Naive thymus-derived CD4-positive, alpha-beta T cell (primary cell): ENCODE measurements at regions of chr22 and their contacts with region 1.

Region 1: GRCh38 chr22:46296257-46297150 is at the start of gene GTSE1:
- DNase-seq: peak; percentile 90 to 97 (median 96)
- ATAC-seq: peak; percentile 99
- H3K4me3 ChIP-seq: peak within 1 kb of the TSS; percentile 72
- H3K4me3 Mint-ChIP-seq: peak within 1 kb of the TSS; percentile 87 to 97 (median 91)
- H3K27ac ChIP-seq: peak within 1 kb of the TSS; percentile 77
- H3K27ac Mint-ChIP-seq: peak within 1 kb of the TSS; percentile 91 to 99 (median 97)
- H3K4me1 ChIP-seq: peaks cover 8 to 15% of the 10 kb centered on the region in 2 donors
- H3K4me1 Mint-ChIP-seq: peaks cover 14 to 60% (median 27%) of the 10 kb centered on the region in 7 donors
- H3K27me3 ChIP-seq: no peaks in the 10 kb centered on the region
- H3K27me3 Mint-ChIP-seq: peaks cover 0 to 11% (median 9%) of the 10 kb centered on the region in 5 donors
- total RNA-seq, gene GTSE1: 0.30 to 55.5 (median 0.61) TPM in 3 of 5 experiments, not detected in the others

Region 2: DNA sequence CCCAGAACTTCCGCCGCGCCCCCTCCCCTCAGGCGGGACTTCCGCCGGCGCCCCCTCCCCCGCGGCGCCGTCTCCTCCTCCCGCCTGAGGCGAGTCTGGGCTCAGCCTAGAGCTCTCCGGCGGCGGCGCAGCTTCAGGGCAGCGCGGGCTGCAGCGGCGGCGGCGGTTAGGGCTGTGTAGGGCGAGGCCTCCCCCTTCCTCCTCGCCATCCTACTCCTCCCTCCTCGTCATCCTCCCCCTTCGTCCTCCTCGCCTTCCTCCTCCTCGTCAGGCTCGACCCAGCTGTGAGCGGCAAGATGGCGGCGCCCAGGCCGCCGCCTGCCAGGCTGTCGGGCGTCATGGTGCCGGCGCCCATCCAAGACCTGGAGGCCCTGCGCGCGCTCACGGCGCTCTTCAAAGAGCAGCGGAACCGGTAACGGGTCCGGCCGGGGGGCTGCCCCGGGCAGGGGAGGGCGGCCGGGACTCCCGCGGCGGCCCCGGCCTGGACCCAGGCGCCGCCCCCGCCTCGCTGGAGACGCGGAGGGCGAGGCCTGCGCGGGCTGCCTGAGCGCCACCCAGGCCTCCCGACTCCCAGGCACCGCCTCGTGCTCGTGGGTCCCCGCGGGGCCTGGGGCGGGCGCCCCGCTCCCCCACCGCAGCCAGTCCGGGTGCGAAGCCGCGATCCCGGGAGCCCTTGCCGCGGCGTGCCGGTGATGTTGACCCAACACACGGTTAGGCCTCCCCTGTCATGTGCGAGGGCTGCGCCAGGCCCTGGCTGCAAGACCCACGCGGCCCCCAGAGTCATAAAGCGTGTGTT is 624.5 kb before region 1 on chr22 and contains the start of gene ATXN10:
- CTCF ChIA-PET with region 1: no interaction called
- POLR2A ChIA-PET with region 1: no interaction called
- intact Hi-C with region 1: loop called in 1 of 2 experiments (anchors 1 kb)
- DNase-seq: peak; percentile 55 to 79 (median 74)
- ATAC-seq: peak; percentile 90
- H3K4me3 ChIP-seq: peak within 1 kb of the TSS; percentile 49
- H3K4me3 Mint-ChIP-seq: peak within 1 kb of the TSS; percentile 86 to 95 (median 90)
- H3K27ac ChIP-seq: peak within 1 kb of the TSS; percentile 75
- H3K27ac Mint-ChIP-seq: peak within 1 kb of the TSS; percentile 38 to 92 (median 88)
- H3K4me1 ChIP-seq: peaks cover 13 to 25% of the 10 kb centered on the region in 2 donors
- H3K4me1 Mint-ChIP-seq: peaks cover 23 to 43% (median 41%) of the 10 kb centered on the region in 7 donors
- H3K27me3 ChIP-seq: no peaks in the 10 kb centered on the region
- H3K27me3 Mint-ChIP-seq: peaks cover 4 to 10% (median 6%) of the 10 kb centered on the region in 5 donors
- total RNA-seq, gene ATXN10: 64.2 to 85.7 (median 73.1) TPM

Region 3: GRCh38 chr22:46057762-46058420 is 238.6 kb before region 1 on chr22:
- CTCF ChIA-PET with region 1: no interaction called
- POLR2A ChIA-PET with region 1: no interaction called
- intact Hi-C with region 1: loop called (anchors 5 kb)
- DNase-seq: peak in 5 of 9 donors; percentile 39 to 55 (median 53)
- ATAC-seq: peak; percentile 74
- H3K4me3 ChIP-seq: no peak overlapping the region
- H3K4me3 Mint-ChIP-seq: peak overlapping the region; percentile 17 to 71 (median 66)
- H3K27ac ChIP-seq: peak overlapping the region; percentile 72
- H3K27ac Mint-ChIP-seq: peak overlapping the region; percentile 84 to 95 (median 87)
- H3K4me1 ChIP-seq: peaks cover 19 to 35% of the 10 kb centered on the region in 2 donors
- H3K4me1 Mint-ChIP-seq: peaks cover 29 to 64% (median 58%) of the 10 kb centered on the region in 7 donors
- H3K27me3 ChIP-seq: no peaks in the 10 kb centered on the region
- H3K27me3 Mint-ChIP-seq: peaks cover 0 to 5% (median 0%) of the 10 kb centered on the region in 5 donors

Region 4: DNA sequence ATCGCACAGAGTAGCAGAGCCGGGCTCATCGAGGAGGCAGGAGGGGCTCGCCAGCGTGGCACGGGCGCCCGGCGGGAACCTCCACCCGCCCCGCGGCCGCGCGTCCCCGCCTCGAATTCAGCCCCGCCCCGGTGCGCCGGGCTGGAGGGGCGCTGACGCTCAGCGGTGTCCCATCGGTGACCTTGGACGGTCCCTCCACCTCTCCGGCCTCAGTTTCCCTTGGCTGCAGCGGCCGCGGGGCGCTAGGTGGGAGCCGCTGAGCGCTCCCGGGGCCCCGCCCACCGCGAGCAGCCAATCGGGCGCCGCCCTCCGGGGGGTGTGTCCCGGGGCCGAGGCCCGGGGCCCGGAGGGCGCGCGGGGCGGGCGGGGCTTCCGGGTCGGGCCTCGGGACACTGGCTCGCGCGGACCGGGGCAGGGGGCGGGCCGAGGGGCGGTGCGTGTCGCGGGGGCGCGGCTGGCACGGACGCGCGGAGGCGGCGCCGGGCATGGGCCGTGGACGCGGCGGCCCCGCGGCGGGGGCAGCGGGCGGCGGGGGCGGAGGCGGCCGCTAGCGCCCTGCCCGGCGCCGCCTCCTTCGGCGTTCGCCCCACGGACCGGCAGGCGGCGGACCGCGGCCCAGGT is 146.4 kb before region 1 on chr22 and contains the start of gene PPARA:
- CTCF ChIA-PET with region 1: no interaction called
- POLR2A ChIA-PET with region 1: interaction called, 5 read pairs
- intact Hi-C with region 1: loop called (anchors 1 to 2 kb)
- DNase-seq: peak; percentile 63 to 97 (median 73)
- ATAC-seq: peak; percentile 90
- H3K4me3 ChIP-seq: peak within 1 kb of the TSS; percentile 74
- H3K4me3 Mint-ChIP-seq: peak within 1 kb of the TSS; percentile 77 to 90 (median 86)
- H3K27ac ChIP-seq: peak within 1 kb of the TSS; percentile 71
- H3K27ac Mint-ChIP-seq: peak within 1 kb of the TSS; percentile 34 to 90 (median 82)
- H3K4me1 ChIP-seq: peaks cover 10 to 15% of the 10 kb centered on the region in 2 donors
- H3K4me1 Mint-ChIP-seq: peaks cover 13 to 24% (median 20%) of the 10 kb centered on the region in 7 donors
- H3K27me3 ChIP-seq: no peaks in the 10 kb centered on the region
- H3K27me3 Mint-ChIP-seq: peaks cover 0 to 40% (median 0%) of the 10 kb centered on the region in 5 donors
- total RNA-seq, gene PPARA: 13.7 to 21.6 (median 18.5) TPM

Region 5: DNA sequence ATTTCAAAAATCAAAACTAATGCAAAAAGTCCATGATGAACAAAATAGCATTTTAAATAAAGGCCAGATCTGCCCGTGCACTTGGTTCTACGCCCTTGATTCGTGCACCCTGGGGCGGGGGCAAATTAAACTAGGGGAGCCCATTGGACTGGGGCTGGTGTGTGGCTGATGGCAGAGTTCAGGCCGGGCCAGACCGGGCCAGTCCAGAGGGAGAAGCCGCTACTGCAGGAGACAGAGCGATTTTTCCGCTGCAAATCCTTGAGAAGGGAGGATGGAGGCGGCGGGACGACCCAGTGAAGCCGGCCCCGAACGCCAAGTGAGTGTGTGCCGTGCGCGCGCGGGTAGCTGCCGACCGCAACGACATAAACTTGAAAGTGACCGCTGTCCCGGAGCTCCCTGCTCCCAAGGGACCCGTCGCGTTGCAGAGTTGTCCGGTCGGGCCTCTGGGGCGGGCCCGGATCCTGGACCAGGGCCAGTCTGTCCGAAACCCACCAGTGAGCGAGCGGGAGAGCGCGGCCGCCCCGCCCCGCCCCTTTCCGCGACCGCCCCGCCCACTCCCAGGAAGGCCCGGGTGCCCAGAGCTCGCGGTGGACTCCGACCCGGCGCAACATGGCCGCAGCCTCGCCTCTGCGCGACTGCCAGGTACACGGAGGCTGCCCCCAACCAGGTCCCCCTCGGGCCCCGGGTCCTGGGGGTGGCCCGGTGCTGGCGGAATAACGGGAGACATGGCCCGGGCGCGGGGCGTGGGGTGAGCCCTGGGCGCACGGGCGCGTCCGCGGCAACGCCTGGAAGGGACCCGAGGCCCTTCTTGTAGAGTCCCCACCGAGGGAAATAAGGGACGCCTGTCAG is 28.8 kb before region 1 on chr22 and contains the start of gene TTC38:
- CTCF ChIA-PET with region 1: no interaction called
- POLR2A ChIA-PET with region 1: interaction called, 3 read pairs
- intact Hi-C with region 1: loop called (anchors 1 kb)
- DNase-seq: peak in 8 of 9 donors; percentile 21 to 72 (median 28)
- ATAC-seq: peak; percentile 90
- H3K4me3 ChIP-seq: peak within 1 kb of the TSS; percentile 63
- H3K4me3 Mint-ChIP-seq: peak within 1 kb of the TSS; percentile 82 to 93 (median 89)
- H3K27ac ChIP-seq: peak within 1 kb of the TSS; percentile 48
- H3K27ac Mint-ChIP-seq: peak within 1 kb of the TSS in 6 of 9 donors; percentile 12 to 77 (median 68)
- H3K4me1 ChIP-seq: peaks cover 0 to 4% of the 10 kb centered on the region in 2 donors
- H3K4me1 Mint-ChIP-seq: peaks cover 6 to 27% (median 17%) of the 10 kb centered on the region in 7 donors
- H3K27me3 ChIP-seq: peaks cover 0 to 3% of the 10 kb centered on the region in 2 donors
- H3K27me3 Mint-ChIP-seq: peaks cover 16 to 35% (median 26%) of the 10 kb centered on the region in 5 donors
- total RNA-seq, gene TTC38: 4.1 to 26.0 (median 7.2) TPM

Region 6: GRCh38 chr22:46367707-46368191 is 71.2 kb after region 1 on chr22:
- CTCF ChIA-PET with region 1: no interaction called
- POLR2A ChIA-PET with region 1: no interaction called
- intact Hi-C with region 1: no loop called
- DNase-seq: peak; percentile 43 to 76 (median 65)
- ATAC-seq: peak; percentile 76
- H3K4me3 ChIP-seq: no peak overlapping the region
- H3K4me3 Mint-ChIP-seq: peak overlapping the region in 5 of 10 donors; percentile 23 to 82 (median 78)
- H3K27ac ChIP-seq: no peak overlapping the region
- H3K27ac Mint-ChIP-seq: peak overlapping the region in 1 of 9 donors; percentile 22
- H3K4me1 ChIP-seq: peaks cover 14 to 44% of the 10 kb centered on the region in 2 donors
- H3K4me1 Mint-ChIP-seq: peaks cover 0 to 28% (median 21%) of the 10 kb centered on the region in 7 donors
- H3K27me3 ChIP-seq: no peaks in the 10 kb centered on the region
- H3K27me3 Mint-ChIP-seq: peaks cover 0 to 20% (median 3%) of the 10 kb centered on the region in 5 donors

Region 7: GRCh38 chr22:46563381-46564083 is 267.0 kb after region 1 on chr22:
- CTCF ChIA-PET with region 1: no interaction called
- POLR2A ChIA-PET with region 1: no interaction called
- intact Hi-C with region 1: no loop called
- DNase-seq: peak; percentile 60 to 82 (median 73)
- ATAC-seq: peak; percentile 94
- H3K4me3 ChIP-seq: peak overlapping the region; percentile 34
- H3K4me3 Mint-ChIP-seq: peak overlapping the region in 6 of 10 donors; percentile 54 to 65 (median 58)
- H3K27ac ChIP-seq: no peak overlapping the region
- H3K27ac Mint-ChIP-seq: peak overlapping the region in 1 of 9 donors; percentile 18
- H3K4me1 ChIP-seq: peaks cover 0 to 5% of the 10 kb centered on the region in 2 donors
- H3K4me1 Mint-ChIP-seq: peaks cover 4 to 11% (median 4%) of the 10 kb centered on the region in 7 donors
- H3K27me3 ChIP-seq: no peaks in the 10 kb centered on the region
- H3K27me3 Mint-ChIP-seq: no peaks in the 10 kb centered on the region